Caco-2 (cell line): ENCODE measurements at regions of chr16 and their contacts with region 1.

Region 1: DNA sequence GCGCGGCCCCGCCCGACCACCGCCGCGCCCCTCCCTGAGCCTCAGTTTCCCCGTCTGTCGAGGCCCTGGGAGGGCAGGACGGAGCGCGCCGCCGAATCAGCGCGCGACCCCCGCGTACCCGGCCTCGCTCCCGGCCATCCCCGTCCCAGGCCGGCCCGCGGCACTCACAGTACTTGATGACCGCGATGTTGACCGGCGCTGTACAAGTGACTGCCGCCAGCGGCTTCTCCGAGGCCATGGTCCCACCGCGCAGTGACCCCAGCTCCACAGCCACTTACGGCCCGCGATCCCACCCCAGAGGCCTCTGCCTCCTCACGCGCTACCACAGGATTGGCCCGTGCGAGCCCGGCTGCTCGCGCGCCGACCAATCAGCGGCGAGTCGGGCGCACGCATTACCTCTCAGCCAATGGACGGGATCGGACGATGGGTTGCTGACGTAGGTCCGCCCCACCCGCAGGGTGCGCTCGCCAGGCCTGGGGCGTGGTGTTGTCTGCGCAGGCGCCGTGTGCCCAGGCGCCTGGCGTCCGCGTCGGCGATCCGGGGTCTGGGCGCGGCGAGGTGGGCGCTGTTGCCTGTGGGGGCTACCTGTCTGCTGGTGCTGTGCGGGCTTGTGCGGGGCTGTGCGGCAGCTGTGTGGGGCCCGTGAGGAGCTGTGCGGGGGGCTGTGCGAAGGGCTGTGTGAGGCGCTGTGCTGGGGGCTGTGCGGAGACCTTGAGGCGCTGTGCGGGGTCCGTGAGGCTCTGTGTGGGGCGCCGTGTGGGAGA is at the start of gene MVD:
- DNase-seq: peak; percentile 99
- H3K4me3 ChIP-seq: peak within 1 kb of the TSS; percentile 84
- H3K4me3 Mint-ChIP-seq: peak within 1 kb of the TSS; percentile 94
- H3K27ac Mint-ChIP-seq: peak within 1 kb of the TSS; percentile 88
- H3K4me1 ChIP-seq: peaks cover 11% of the 10 kb centered on the region
- H3K4me1 Mint-ChIP-seq: peaks cover 5% of the 10 kb centered on the region
- H3K27me3 ChIP-seq: no peaks in the 10 kb centered on the region
- H3K27me3 Mint-ChIP-seq: no peaks in the 10 kb centered on the region
- CTCF ChIP-seq: peak in 1 of 2 experiments; percentile 18
- total RNA-seq, gene MVD: 127 and 141 TPM in 2 replicates

Region 2: DNA sequence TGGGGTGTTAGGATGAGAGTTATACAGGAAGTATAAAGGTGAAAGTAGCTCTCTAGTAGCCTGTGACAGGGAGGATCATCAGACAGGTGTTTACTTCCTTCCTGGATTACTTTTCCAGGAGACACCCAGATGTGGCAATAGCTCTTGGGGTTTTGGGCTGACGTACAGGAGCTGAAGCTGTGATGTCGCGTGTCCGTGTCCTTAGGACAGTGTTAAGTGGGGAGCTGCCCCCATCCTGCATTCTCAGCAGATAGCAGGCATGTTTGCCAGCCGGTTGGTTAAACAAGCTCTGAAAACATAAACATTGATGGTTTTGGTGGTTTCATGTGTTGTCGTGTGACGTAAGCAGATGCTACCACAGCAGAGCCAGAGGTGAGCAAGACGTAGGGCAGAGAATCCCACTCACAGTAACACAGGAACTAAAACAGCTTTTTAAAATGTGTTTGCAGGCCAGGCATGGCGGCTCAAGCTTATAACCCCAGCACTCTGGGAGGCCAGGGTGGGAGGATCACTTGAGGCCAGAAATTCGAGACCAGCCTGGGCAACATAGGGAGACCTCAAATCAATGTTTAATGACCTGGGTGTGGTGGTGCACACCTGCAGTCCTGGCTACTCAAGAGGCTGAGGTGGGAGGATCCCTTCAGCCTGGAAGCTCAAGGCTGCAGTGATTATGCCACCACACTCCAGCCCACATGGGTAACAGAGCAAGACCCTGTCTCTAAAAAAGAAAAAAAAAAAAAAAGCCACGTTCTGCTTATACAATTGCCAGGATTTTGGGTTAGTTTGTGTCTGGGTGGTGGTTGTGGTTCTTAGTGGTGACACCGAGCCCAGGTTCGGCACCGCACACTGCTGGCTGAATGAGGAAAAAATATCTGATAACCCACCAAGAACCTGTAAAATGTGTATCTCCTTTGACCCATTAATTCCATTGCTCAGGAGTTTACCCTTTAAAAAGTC is 42.9 kb before region 1 on chr16:
- CTCF ChIA-PET with region 1: no interaction called
- POLR2A ChIA-PET with region 1: no interaction called
- intact Hi-C with region 1: no loop called
- DNase-seq: no peak
- H3K4me3 ChIP-seq: no peak overlapping the region
- H3K4me3 Mint-ChIP-seq: no peak overlapping the region
- H3K27ac Mint-ChIP-seq: no peak overlapping the region
- H3K4me1 ChIP-seq: peaks cover 10% of the 10 kb centered on the region; the same call in 1 of the 2 replicates
- H3K4me1 Mint-ChIP-seq: peaks cover 21% of the 10 kb centered on the region
- H3K27me3 ChIP-seq: no peaks in the 10 kb centered on the region
- H3K27me3 Mint-ChIP-seq: no peaks in the 10 kb centered on the region
- CTCF ChIP-seq: no peak

Region 3: DNA sequence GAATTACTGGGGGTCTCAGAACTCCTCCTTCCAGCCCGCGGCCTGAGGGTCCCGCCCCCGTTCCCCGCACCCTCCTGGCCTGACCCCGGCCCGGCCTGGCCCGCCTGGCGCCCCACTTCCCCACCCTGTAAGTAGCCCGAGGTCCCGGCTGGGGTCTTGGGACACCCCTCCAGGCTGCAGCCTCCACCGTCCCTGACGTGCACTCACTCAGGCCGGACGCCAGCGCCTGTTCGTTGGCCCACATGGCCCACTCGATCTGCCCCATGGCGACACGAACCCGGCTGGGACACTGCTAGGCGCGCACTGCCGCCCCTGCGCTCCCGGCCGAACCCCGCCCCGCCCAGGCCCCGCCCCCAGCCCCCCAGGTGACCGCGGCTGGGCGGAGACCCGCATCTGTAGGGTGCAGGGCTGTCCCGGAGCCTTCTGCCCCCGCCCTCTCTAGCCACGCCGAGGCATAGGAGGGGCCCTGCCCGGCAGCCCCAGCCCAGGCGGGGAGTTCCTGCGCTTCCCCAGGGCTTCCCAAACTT is 12.2 kb before region 1 on chr16 and contains the start of gene CYBA:
- CTCF ChIA-PET with region 1: no interaction called
- POLR2A ChIA-PET with region 1: interaction called, 4 read pairs
- intact Hi-C with region 1: loop called (anchors 1 kb)
- DNase-seq: peak; percentile 88 to 90
- H3K4me3 ChIP-seq: peak within 1 kb of the TSS; percentile 96
- H3K4me3 Mint-ChIP-seq: peak within 1 kb of the TSS; percentile 78
- H3K27ac Mint-ChIP-seq: peak within 1 kb of the TSS; percentile 87
- H3K4me1 ChIP-seq: peaks cover 17% of the 10 kb centered on the region
- H3K4me1 Mint-ChIP-seq: peaks cover 6% of the 10 kb centered on the region
- H3K27me3 ChIP-seq: no peaks in the 10 kb centered on the region
- H3K27me3 Mint-ChIP-seq: no peaks in the 10 kb centered on the region
- CTCF ChIP-seq: no peak
- total RNA-seq, gene CYBA: 351 and 377 TPM in 2 replicates

Region 4: GRCh38 chr16:88686439-88687253 is 23.6 kb after region 1 on chr16 and contains the start of gene SNAI3:
- CTCF ChIA-PET with region 1: interaction called, 3 read pairs
- POLR2A ChIA-PET with region 1: interaction called, 3 read pairs
- intact Hi-C with region 1: loop called (anchors 1 kb)
- DNase-seq: peak; percentile 92 to 98
- H3K4me3 ChIP-seq: peak within 1 kb of the TSS; percentile 82
- H3K4me3 Mint-ChIP-seq: peak within 1 kb of the TSS; percentile 78
- H3K27ac Mint-ChIP-seq: no peak within 1 kb of the TSS
- H3K4me1 ChIP-seq: peaks cover 24% of the 10 kb centered on the region
- H3K4me1 Mint-ChIP-seq: peaks cover 13% of the 10 kb centered on the region
- H3K27me3 ChIP-seq: no peaks in the 10 kb centered on the region
- H3K27me3 Mint-ChIP-seq: no peaks in the 10 kb centered on the region
- CTCF ChIP-seq: no peak
- total RNA-seq, gene SNAI3: 3.5 TPM in 2 replicates

Region 5: DNA sequence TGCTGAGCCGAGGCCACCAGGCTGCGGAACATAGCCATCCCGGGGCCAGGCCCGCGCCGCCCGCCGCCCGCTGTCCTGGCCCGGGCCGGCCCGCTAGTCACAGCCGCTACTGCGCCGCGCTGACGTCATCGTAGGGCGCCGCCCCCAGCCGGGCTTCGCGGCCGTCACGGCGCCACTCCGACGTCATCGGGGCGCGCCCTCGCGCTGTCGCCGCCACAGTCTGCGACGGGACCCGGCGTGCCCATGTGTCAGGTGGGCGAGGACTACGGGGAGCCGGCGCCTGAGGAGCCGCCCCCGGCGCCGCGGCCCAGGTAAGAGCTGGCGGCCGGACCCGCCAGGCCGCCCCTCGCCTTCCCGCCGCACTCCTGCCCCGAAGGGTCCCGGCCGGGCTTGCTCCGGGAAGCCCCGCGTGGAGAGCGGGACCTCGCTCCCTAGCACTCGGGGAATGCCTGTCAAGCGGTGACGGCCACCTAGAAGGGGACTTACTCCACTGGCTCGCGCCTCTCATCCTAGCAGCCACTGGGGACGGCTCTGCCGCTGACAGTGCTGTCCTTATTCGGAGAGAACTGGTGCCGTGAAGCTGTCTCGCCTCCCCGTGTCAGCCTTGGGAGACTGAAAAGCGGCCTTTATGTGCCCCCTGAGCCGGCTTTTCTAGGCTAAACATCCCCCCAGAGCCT is 43.4 kb after region 1 on chr16 and contains the starts of genes CTU2 and RNF166:
- CTCF ChIA-PET with region 1: no interaction called
- POLR2A ChIA-PET with region 1: no interaction called
- intact Hi-C with region 1: loop called (anchors 5 kb)
- DNase-seq: peak; percentile 89 to 97
- H3K4me3 ChIP-seq: peak within 1 kb of the TSS; percentile 94
- H3K4me3 Mint-ChIP-seq: peak within 1 kb of the TSS; percentile 82
- H3K27ac Mint-ChIP-seq: peak within 1 kb of the TSS; percentile 60
- H3K4me1 ChIP-seq: peaks cover 9% of the 10 kb centered on the region; the same call in 1 of the 2 replicates
- H3K4me1 Mint-ChIP-seq: peaks cover 7% of the 10 kb centered on the region
- H3K27me3 ChIP-seq: no peaks in the 10 kb centered on the region
- H3K27me3 Mint-ChIP-seq: no peaks in the 10 kb centered on the region
- CTCF ChIP-seq: no peak
- total RNA-seq, gene CTU2: 44.3 and 54.9 TPM in 2 replicates
- total RNA-seq, gene RNF166: 37.3 and 40.4 TPM in 2 replicates